ENCODE measurements at regions of chr2 and their contacts with region 1.

Region 1: GRCh38 chr2:119659601-119660342 is 19.2 kb upstream of the TMEM177 start:
- DNase-seq: peak in 1 of 2 experiments; percentile 39
- ATAC-seq: peak in 1 of 2 experiments; percentile 86; a peak in 3 of 6 replicates
- H3K4me3 ChIP-seq: no peak overlapping the region
- H3K27ac ChIP-seq: no peak overlapping the region
- H3K4me1 ChIP-seq: no peaks in the 10 kb centered on the region
- CTCF ChIP-seq: peak; percentile 83
- EP300 ChIP-seq: no peak
- POLR2A ChIP-seq: no peak
- RAD21 ChIP-seq: peak; percentile 77 to 82

Region 2: GRCh38 chr2:119184512-119184911 is 475.3 kb before region 1 on chr2:
- CTCF ChIA-PET with region 1: no interaction called
- POLR2A ChIA-PET with region 1: no interaction called
- DNase-seq: no peak
- ATAC-seq: no peak
- H3K4me3 ChIP-seq: no peak overlapping the region
- H3K27ac ChIP-seq: no peak overlapping the region
- H3K4me1 ChIP-seq: 0 out of 3 replicates have a peak, but pooled peaks cover 2% of the 10 kb centered on the region
- CTCF ChIP-seq: no peak
- EP300 ChIP-seq: no peak
- POLR2A ChIP-seq: no peak
- RAD21 ChIP-seq: no peak

Region 3: DNA sequence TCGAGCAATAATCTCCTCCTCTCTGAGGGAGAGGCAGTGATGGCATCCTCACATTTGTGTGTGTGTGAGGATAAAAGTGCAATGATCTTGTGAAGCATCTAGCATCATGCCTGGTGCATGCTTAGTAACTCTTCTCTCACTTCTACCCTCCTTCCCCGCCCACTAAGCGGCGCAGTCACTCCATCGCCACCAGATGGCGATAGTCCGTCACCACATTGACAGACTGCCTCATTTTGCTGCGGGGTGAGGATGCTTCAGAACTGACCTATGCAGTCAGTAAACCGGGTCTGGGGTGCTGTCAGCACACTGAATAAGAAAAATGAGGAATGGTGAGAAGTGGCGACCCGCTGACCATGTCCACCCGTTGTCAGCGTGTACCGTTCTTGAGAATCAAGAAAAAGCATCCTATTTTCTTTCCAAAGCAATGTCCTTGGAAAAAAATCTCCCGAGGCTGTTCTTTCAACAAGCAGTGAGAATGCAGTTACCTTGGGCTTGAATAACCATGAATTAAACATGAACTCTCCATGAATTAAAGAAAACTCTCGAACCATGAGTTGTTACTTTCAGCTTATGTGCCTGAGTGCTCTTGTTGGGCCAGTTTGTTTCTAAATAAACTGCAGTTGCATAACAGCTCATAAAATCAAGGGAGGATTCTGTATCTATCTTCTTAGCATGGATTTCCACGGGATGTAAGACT is 18.1 kb before region 1 on chr2:
- CTCF ChIA-PET with region 1: interaction called, 90 read pairs
- POLR2A ChIA-PET with region 1: no interaction called
- DNase-seq: peak; percentile 74 to 87
- ATAC-seq: peak; percentile 96 to 99
- H3K4me3 ChIP-seq: no peak overlapping the region
- H3K27ac ChIP-seq: no peak overlapping the region
- H3K4me1 ChIP-seq: no peaks in the 10 kb centered on the region
- CTCF ChIP-seq: peak; percentile 95
- EP300 ChIP-seq: no peak
- POLR2A ChIP-seq: no peak
- RAD21 ChIP-seq: peak; percentile 79 to 86

Region 4: GRCh38 chr2:119647440-119648169 is 12.2 kb before region 1 on chr2:
- CTCF ChIA-PET with region 1: interaction called, 90 read pairs
- POLR2A ChIA-PET with region 1: no interaction called
- DNase-seq: no peak
- ATAC-seq: no peak
- H3K4me3 ChIP-seq: no peak overlapping the region
- H3K27ac ChIP-seq: no peak overlapping the region
- H3K4me1 ChIP-seq: no peaks in the 10 kb centered on the region
- CTCF ChIP-seq: no peak
- EP300 ChIP-seq: no peak
- POLR2A ChIP-seq: no peak
- RAD21 ChIP-seq: no peak

Region 5: GRCh38 chr2:119786295-119786694 is 126.5 kb after region 1 on chr2:
- CTCF ChIA-PET with region 1: no interaction called
- POLR2A ChIA-PET with region 1: no interaction called
- DNase-seq: no peak
- ATAC-seq: no peak
- H3K4me3 ChIP-seq: no peak overlapping the region
- H3K27ac ChIP-seq: no peak overlapping the region
- H3K4me1 ChIP-seq: peaks cover 8% of the 10 kb centered on the region; the same call in 2 of the 3 replicates
- CTCF ChIP-seq: no peak
- EP300 ChIP-seq: no peak
- POLR2A ChIP-seq: no peak
- RAD21 ChIP-seq: no peak